Activated CD4-positive, alpha-beta memory T cell treated with anti-CD3 and anti-CD28 coated beads, Interleukin-2, amount 10 ng/mL, durations not matched to agents 7 days and 5 days (primary cell): ENCODE measurements at regions of chr7 and their contacts with region 1.

Region 1: GRCh38 chr7:23430893-23431259 is 39.4 kb downstream of the IGF2BP3 start:
- DNase-seq: no peak
- H3K4me3 Mint-ChIP-seq: no peak overlapping the region
- H3K27ac Mint-ChIP-seq: no peak overlapping the region
- H3K4me1 Mint-ChIP-seq: peaks cover 3% of the 10 kb centered on the region
- H3K27me3 Mint-ChIP-seq: peaks cover 31% of the 10 kb centered on the region

Region 2: GRCh38 chr7:23418046-23418445 is 12.8 kb before region 1 on chr7:
- CTCF ChIA-PET with region 1: interaction called, 17 read pairs
- POLR2A ChIA-PET with region 1: no interaction called
- DNase-seq: no peak
- H3K4me3 Mint-ChIP-seq: no peak overlapping the region
- H3K27ac Mint-ChIP-seq: no peak overlapping the region
- H3K4me1 Mint-ChIP-seq: no peaks in the 10 kb centered on the region
- H3K27me3 Mint-ChIP-seq: peaks cover 3% of the 10 kb centered on the region